BJ (cell line): ENCODE measurements at regions of chr16 and their contacts with region 1.

Region 1: DNA sequence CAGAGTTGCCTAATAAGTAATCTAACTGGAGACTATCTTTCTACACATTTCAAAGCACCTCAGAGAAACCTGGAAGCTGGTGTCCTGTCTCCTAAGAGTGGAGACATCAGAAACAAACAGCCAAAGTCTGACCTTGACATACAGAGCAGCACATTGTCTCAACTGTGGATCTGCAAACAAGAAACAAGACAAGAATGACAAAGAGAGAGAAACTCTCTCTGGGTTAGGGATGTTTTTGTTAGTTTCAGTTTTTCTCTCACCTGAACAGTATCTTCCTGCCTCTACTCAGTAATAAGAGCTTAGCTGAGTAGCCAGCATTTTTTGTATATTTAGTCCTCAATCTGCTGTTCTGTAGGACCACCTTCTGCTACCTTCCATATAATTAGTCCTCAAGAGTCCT is 8.9 kb downstream of the ZNF597 start:
- DNase-seq: no peak
- H3K4me3 ChIP-seq: no peak overlapping the region
- H3K27me3 ChIP-seq: peaks cover 1% of the 10 kb centered on the region
- CTCF ChIP-seq: no peak

Region 2: GRCh38 chr16:3457434-3458252 is 23.3 kb after region 1 on chr16:
- CTCF ChIA-PET with region 1: no interaction called
- POLR2A ChIA-PET with region 1: interaction called, 10 read pairs
- DNase-seq: no peak
- H3K4me3 ChIP-seq: peak overlapping the region; percentile 97
- H3K27me3 ChIP-seq: no peaks in the 10 kb centered on the region
- CTCF ChIP-seq: peak; percentile 41

Region 3: DNA sequence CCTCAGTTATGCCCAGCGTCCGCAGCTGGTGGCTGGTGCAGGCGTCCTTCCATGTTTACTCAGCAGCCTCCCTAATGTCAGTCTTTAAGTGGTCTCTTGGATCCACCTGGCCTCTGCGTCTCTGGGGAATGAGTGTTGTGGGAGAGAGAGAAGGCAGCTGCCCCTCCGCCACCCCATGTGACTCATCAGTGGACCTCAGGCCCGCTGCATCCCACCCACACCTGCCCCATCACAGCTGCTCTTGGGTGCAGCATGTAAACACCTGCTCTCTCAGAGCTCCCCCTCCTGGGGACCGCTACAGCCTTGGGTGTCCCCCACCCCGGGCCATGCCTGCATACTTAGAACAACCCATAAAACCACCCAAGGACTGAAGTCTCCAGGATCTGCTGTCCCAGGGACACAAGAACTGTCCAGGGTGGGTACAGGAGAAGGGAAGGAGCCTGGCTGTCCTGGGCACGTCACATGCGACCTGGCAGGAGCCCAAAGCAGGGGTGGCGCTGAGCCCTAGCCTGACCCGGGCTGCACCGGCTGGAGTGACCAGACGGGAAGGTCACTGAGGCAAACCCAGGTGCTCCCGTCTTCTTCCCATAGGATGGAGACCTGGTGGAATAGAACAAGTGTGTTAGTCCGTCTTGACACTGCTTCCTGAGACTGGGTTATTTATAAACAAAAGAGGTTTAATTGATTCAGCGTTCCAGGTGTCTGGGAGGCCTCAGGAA is 56.7 kb after region 1 on chr16:
- CTCF ChIA-PET with region 1: no interaction called
- POLR2A ChIA-PET with region 1: no interaction called
- DNase-seq: no peak
- H3K4me3 ChIP-seq: no peak overlapping the region
- H3K27me3 ChIP-seq: no peaks in the 10 kb centered on the region
- CTCF ChIP-seq: no peak